Activated B cell treated with CpG ODN at 0.5 μM for 24 hours (primary cell): ENCODE measurements at regions of chr1 and their contacts with region 1.

Region 1: DNA sequence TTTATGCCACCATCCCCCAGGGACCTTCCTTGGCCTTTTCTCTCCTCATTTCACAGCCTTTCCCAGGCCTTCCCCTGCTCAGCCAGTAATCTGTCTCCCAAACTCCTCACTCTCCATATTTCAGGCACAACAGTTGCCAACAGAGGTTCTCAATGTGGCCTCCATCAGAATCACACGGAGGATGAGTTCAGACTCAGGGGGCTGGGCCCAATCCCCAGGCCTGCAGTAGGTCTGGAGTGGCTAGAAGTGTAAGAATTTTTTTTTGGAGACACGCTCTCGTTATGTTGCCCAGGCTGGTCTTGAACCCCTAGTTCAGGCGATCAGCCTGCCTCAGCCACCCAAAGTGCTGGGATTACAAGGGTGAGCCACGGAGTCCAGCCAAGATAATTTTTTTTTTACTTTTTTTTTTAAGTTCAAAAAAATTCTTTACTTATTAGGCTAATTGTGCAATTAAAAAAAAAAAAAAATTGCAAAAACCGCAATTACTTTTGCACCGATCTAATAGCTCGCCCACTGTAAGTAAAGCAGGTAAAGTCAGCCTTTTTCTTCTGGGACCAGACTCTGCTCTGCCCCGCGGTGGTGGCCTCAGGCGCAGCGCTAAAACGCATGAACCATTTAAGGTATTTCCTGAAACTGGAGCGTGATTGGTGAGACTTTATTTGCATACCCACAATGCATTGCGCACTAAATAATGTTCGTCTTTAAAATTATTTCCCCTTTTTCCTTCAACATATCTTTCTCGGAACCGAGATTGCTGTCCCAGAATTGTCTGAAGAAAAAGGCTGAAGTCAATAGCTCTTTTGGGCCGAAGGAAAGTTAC is 18.7 kb downstream of the KIAA2013 start:
- DNase-seq: peak; percentile 74
- ATAC-seq: peak; percentile 47
- H3K4me3 Mint-ChIP-seq: peak overlapping the region; percentile 94
- H3K27ac Mint-ChIP-seq: peak overlapping the region; percentile 100
- H3K4me1 Mint-ChIP-seq: peaks cover 21% of the 10 kb centered on the region
- H3K27me3 Mint-ChIP-seq: no peaks in the 10 kb centered on the region
- CTCF ChIP-seq: no peak

Region 2: DNA sequence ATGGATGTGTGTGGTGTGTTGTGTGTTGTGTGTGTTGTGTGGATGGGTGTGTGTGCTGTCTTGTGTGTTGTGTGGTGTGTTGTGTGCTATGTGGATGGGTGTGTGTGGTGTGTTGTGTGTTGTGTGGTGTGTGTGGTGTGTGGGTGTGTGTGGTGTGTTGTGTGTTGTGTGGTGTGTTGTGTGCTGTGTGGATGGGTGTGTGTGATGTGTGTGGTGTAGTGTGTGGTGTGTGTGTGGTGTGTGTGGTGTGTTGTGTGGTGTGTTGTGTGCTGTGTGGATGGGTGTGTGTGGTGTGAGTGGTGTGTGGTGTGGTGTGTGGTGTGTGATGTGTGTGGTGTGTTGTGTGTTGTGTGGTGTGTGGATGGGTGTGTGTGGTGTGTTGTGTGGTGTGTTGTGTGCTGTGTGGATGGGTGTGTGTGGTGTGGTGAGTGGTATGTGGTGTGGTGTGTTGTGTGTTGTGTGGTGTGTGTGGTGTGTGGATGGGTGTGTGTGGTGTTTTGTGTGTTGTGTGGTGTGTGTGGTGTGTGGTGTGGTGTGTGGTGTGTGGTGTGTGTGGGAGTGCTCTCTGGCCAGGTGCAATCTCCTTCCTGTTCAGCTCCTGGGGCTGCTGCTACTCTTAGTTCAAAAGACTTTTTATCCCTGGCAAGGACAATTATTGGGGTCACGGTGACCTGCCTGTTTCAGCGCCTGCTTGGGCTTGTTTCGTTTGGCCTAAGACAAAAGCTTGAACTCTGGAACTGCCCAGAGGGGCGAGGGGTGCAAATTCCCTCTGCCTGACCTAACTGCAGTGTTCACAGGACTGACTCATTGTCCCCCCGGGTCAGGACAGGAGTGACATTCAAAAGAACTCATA is 533.4 kb before region 1 on chr1:
- CTCF ChIA-PET with region 1: no interaction called
- POLR2A ChIA-PET with region 1: interaction called, 10 read pairs
- intact Hi-C with region 1: no loop called
- DNase-seq: no peak
- ATAC-seq: no peak
- H3K4me3 Mint-ChIP-seq: no peak overlapping the region
- H3K27ac Mint-ChIP-seq: no peak overlapping the region
- H3K4me1 Mint-ChIP-seq: peaks cover 22% of the 10 kb centered on the region
- H3K27me3 Mint-ChIP-seq: peaks cover 8% of the 10 kb centered on the region
- CTCF ChIP-seq: no peak

Region 3: DNA sequence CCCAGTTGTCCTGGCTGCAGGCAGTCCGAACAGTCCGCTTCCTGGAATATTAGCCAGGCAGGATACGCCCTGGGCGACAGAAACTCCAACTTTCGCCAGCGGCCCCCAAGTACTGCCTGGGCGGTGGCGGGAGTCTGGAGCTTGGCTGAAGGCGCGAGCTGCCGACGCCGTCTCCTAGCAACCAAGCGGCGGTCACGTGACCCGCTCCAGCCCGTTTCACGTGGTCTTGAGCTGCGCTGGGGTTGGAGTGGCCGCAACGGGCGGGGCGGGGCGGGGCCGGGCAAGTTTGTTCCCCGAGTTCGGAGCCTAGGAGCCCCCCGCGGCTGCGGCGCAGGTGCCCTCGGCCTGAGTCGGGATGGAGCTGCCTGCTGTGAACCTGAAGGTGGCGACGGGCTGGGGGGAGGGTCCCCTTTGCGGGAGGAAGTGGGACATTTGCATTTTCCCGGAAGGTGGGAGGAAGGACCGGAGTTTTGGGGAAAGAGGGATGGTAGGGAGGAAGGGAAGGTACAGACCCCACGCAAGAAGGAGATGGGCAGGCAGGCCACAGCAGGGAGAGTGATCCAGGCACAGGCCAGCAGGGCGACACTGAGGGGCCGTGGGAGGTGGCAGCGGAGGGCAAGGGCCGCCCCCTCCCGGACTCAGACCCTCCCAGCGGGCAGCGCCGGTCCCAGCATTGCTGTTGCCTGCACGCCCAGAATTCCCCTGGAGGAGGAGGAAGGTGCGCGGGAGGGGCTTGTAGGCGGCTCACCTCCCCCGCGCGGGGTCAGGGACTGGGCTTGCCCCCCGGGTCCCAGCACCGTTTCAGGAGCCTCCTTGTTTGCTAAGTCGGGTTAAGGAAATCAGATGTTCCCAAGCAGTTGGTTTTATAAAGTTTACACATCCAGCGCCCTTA is 171.4 kb before region 1 on chr1 and contains the start of gene AGTRAP:
- CTCF ChIA-PET with region 1: no interaction called
- POLR2A ChIA-PET with region 1: interaction called, 25 read pairs
- intact Hi-C with region 1: loop called (anchors 5 kb)
- DNase-seq: peak; percentile 80
- ATAC-seq: peak; percentile 88
- H3K4me3 Mint-ChIP-seq: peak within 1 kb of the TSS; percentile 93
- H3K27ac Mint-ChIP-seq: peak within 1 kb of the TSS; percentile 79
- H3K4me1 Mint-ChIP-seq: peaks cover 40% of the 10 kb centered on the region
- H3K27me3 Mint-ChIP-seq: no peaks in the 10 kb centered on the region
- CTCF ChIP-seq: no peak
- total RNA-seq, gene AGTRAP: 10.9 and 13.9 TPM in 2 replicates

Region 4: DNA sequence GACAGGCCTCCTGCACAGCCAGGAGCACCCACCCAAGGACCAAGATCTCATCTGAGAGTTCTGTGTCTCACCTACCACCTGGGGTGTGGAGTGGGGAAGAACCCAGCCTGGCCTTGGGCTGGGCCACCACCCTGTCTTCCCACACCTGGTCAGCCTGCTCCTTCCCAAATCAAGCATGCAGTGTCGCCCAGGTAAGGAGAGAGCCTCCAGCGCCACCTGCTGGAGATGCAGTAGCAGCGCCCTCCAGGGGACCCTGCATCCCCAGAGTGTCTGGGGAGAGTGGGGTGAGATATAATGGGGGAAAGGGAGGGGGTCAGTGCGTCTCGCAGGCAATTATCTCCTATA is 13.6 kb before region 1 on chr1:
- CTCF ChIA-PET with region 1: interaction called, 3 read pairs
- POLR2A ChIA-PET with region 1: interaction called, 29 read pairs
- intact Hi-C with region 1: no loop called
- DNase-seq: peak; percentile 63
- ATAC-seq: peak; percentile 84
- H3K4me3 Mint-ChIP-seq: no peak overlapping the region
- H3K27ac Mint-ChIP-seq: no peak overlapping the region
- H3K4me1 Mint-ChIP-seq: no peaks in the 10 kb centered on the region
- H3K27me3 Mint-ChIP-seq: peaks cover 17% of the 10 kb centered on the region
- CTCF ChIP-seq: no peak

Region 5: DNA sequence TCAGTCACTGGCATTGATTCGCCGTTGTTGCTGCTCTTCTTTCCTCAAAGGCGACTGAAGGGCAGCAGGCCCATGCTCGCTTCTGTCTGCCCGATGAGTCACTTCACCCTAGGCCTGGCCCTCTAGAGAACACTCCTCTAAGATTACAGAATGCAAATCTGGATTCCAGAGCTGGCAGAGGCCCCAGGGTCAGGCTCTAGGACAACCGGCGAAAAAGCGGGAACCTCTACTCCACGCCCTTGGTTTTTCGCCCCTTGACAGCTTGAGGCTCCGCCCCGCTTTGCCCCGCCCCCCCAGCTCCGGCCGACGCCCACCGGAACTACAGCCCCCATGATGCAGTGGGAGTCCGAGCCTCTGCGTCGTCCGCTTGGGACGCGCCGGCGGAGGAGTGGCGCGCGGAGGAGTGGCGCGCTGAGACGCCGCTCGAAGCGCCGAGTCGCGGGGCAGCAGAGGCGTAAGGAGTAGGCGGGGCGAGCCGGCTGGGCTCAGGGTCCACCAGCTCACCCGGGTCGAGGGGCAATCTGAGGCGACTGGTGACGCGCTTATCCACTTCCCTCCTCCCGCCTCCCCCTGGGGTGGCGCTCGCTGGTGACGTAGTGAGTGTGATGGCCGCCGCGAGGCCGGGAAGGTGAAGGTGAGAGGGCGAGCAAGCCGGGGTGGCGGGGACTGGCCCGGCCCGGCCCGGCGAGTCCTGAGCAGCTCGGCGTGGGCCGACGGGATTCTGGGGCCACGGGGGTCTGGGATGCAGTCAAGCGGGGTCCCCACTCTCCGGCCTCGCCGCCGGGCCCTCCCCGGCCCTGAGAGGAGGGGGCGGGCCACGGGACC is 72.6 kb after region 1 on chr1 and contains the start of gene MFN2:
- CTCF ChIA-PET with region 1: interaction called, 4 read pairs
- POLR2A ChIA-PET with region 1: interaction called, 173 read pairs
- intact Hi-C with region 1: loop called (anchors 1 kb)
- DNase-seq: peak; percentile 95
- ATAC-seq: peak; percentile 95
- H3K4me3 Mint-ChIP-seq: peak within 1 kb of the TSS; percentile 90
- H3K27ac Mint-ChIP-seq: peak within 1 kb of the TSS; percentile 85
- H3K4me1 Mint-ChIP-seq: peaks cover 34% of the 10 kb centered on the region
- H3K27me3 Mint-ChIP-seq: no peaks in the 10 kb centered on the region
- CTCF ChIP-seq: no peak
- total RNA-seq, gene MFN2: 46.5 and 54.1 TPM in 2 replicates

Region 6: DNA sequence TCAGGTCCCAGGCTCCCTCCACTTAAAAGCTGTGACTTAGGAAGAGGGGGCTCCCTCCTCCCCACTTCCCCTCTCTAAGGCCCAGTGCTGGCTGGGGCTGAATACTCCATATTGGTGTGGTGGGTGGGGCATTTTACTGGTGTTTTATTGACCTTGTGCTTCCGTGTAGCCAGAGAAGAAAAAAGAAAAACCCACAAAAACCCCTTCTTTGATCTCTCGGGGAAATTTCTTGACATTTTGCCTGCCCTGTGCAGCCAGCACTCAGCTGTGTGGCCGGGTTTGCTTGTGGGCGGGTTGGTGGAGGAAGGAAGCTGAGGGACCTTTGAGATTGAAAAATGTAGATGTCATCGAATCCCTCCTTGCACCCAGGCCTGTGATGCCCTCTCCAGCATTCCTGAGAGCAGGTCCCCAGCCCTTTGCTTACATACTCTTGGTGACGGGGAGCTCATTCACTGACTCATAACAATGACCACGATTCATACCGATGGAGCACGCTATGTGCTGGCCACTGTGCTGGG is 180.4 kb after region 1 on chr1:
- CTCF ChIA-PET with region 1: no interaction called
- POLR2A ChIA-PET with region 1: interaction called, 31 read pairs
- intact Hi-C with region 1: no loop called
- DNase-seq: peak; percentile 45
- ATAC-seq: peak; percentile 88
- H3K4me3 Mint-ChIP-seq: peak overlapping the region; percentile 53
- H3K27ac Mint-ChIP-seq: peak overlapping the region; percentile 95
- H3K4me1 Mint-ChIP-seq: peaks cover 45% of the 10 kb centered on the region
- H3K27me3 Mint-ChIP-seq: no peaks in the 10 kb centered on the region
- CTCF ChIP-seq: no peak